ENCODE measurements at regions of chr14 and their contacts with region 1.

Region 1: DNA sequence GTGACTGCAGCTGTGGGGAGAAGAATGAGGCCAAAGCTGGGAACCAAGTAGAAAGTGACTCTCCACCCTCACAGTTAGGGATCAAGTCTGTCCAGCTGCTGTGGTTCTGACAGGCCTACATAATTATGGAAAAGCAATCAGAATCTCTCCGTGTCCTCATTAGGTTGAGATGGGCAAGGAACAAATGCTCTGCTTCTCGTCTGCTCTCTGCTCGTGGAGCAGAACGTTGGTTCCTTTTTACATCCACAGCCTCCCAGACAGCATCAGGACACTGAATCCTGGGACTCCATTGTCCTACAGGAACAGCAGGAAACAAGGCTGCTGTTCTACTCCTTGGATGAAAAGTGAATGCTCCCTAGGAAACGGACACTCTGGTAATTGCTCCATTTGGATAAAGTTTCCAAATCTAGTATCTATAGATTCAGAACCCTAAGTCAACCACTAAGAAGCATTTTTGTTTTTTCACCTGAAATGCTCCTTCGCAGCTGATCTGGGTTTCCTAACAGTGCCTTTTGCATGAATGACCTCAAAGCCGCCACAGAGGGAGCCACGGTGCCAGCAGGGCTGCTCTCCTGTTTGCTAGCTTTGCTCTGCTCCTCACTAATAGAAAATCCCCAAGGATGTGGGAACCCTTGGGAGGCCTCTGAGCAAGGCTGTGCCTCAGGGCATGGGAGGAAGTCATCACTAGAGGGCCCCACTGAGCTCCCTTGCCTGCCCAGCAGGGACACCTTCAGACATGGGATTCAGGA is 102.0 kb downstream of the EGLN3 start:
- DNase-seq: peak; percentile 40 to 96 (median 73)

Region 2: GRCh38 chr14:33879684-33880286 is 30.9 kb after region 1 on chr14:
- intact Hi-C with region 1: no loop called
- DNase-seq: no peak

Region 3: GRCh38 chr14:33943096-33943884 is 94.4 kb after region 1 on chr14:
- intact Hi-C with region 1: loop called (anchors 5 kb)
- DNase-seq: peak in 7 of 10 donors; percentile 24 to 82 (median 38)